RWPE1 (cell line): ENCODE measurements at regions of chr9 and their contacts with region 1.

Region 1: GRCh38 chr9:32579706-32580331 is 6.9 kb upstream of the NDUFB6 start:
- DNase-seq: peak; percentile 51
- H3K27ac ChIP-seq: no peak overlapping the region
- CTCF ChIP-seq: peak; percentile 99

Region 2: DNA sequence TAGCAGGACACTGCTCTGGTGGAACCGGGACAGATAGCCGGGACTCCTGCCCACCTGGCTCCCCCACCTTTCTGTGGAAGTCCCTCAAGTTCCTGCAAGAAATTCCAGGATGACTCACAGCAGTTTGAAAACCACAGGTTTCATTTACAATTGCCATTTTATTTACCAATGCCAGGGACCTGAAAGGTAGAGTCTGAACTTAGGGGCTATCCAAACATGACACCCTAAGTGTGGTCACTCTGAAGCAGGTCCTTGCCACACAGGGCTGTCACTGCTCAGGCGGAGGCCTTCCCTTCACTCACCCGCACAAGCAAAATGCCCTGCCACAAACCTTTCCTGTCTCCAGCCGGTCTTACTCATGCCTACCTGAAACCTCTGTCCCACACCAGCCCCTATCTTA is 119.0 kb after region 1 on chr9:
- CTCF ChIA-PET with region 1: no interaction called
- POLR2A ChIA-PET with region 1: no interaction called
- DNase-seq: peak; percentile 42
- H3K27ac ChIP-seq: no peak overlapping the region
- CTCF ChIP-seq: no peak

Region 3: DNA sequence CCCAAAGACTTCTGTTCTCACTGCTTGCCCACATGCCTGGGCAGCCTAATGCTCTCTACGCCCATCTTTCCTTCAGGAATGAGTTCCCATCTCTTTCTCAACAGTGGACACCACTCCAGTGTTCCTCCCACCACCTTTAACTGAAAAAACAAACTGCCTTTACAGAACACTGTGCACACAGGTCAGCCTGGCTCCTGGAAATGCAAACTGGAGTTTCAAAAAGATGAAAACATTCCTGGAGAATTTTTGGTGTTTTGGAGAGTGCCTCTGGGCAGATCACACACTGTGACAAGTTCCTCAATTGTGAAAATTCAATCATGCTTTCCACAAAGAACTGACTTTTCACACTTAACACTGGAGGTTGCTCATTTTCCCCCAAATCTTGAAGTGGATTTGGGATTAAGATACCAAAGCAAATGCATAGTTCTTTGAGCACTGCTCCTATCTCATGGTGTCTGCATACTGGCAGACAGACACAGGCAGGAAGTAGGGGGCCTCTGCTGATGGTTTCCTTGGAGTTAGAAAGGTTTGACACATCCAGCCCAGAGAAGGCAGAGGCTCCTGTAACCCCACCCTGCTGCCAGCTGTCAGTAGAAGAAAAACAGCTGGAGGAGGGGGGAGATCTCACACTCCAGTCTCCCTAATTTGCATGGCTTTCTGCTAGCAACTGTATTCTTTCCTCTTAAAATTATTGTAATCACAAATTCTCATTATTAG is 377.4 kb after region 1 on chr9:
- CTCF ChIA-PET with region 1: interaction called, 11 read pairs
- POLR2A ChIA-PET with region 1: no interaction called
- DNase-seq: no peak
- H3K27ac ChIP-seq: no peak overlapping the region
- CTCF ChIP-seq: no peak